ENCODE measurements at regions of chr13 and their contacts with region 1.

Region 1: GRCh38 chr13:99566125-99567083 is 65.1 kb downstream of the TM9SF2 start:
- DNase-seq: no peak
- ATAC-seq: peak; percentile 62
- H3K4me3 Mint-ChIP-seq: no peak overlapping the region
- H3K27ac Mint-ChIP-seq: peak overlapping the region; percentile 86
- H3K4me1 Mint-ChIP-seq: peaks cover 9% of the 10 kb centered on the region
- H3K27me3 Mint-ChIP-seq: peaks cover 2% of the 10 kb centered on the region; the same call in 1 of the 2 replicates
- CTCF ChIP-seq: no peak

Region 2: DNA sequence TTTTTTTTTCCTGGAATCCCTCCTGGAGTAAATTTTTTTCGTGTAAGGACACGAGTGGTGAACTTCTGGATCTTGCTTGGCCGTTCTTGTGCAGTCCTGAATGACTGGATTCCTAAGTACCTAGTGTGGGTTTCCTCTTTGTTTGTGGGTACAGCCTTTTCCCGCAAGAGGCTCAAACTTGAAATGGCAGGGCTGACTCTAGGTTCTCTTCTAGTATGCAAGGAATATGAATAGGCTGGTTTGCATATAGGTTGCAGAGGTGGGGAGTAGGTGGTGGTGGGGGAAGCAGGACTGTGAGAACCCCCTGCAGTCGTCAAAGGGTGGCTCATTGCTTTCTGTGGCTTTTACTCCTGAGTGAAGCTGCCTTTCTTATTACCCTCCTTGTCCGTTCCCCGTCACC is 352.2 kb before region 1 on chr13:
- CTCF ChIA-PET with region 1: no interaction called
- POLR2A ChIA-PET with region 1: no interaction called
- DNase-seq: no peak
- ATAC-seq: peak; percentile 60
- H3K4me3 Mint-ChIP-seq: no peak overlapping the region; the same call in 1 of the 2 replicates
- H3K27ac Mint-ChIP-seq: peak overlapping the region; percentile 71
- H3K4me1 Mint-ChIP-seq: peaks cover 45% of the 10 kb centered on the region
- H3K27me3 Mint-ChIP-seq: no peaks in the 10 kb centered on the region
- CTCF ChIP-seq: no peak

Region 3: DNA sequence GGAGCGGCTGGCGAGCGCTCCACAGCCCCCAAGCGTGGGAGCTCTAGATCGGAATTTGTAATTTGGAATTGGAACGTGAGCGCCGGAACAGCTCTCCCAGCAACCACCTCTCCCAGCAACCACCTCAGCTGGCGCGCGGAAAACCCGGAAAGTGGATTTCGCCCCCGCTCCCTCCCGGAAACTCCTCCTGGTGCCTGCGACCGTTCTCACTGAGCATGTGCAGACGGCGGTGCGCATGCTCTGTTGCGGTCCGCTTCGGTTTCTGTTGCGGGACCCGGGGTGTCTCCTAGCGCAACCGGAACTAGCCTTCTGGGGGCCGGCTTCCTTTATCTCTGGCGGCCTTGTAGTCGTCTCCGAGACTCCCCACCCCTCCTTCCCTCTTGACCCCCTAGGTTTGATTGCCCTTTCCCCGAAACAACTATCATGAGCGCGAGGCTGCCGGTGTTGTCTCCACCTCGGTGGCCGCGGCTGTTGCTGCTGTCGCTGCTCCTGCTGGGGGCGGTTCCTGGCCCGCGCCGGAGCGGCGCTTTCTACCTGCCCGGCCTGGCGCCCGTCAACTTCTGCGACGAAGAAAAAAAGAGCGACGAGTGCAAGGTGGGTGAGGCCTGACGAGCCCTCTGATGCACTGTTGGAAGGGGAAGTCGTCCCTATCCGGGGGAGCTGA is 65.1 kb before region 1 on chr13 and contains the start of gene TM9SF2:
- CTCF ChIA-PET with region 1: no interaction called
- POLR2A ChIA-PET with region 1: interaction called, 14 read pairs
- DNase-seq: peak; percentile 100
- ATAC-seq: peak; percentile 80
- H3K4me3 Mint-ChIP-seq: peak within 1 kb of the TSS; percentile 93
- H3K27ac Mint-ChIP-seq: peak within 1 kb of the TSS; percentile 95
- H3K4me1 Mint-ChIP-seq: peaks cover 34% of the 10 kb centered on the region
- H3K27me3 Mint-ChIP-seq: no peaks in the 10 kb centered on the region
- CTCF ChIP-seq: no peak
- total RNA-seq, gene TM9SF2: 81.9 to 84.0 TPM (median 81.9 TPM) in 3 replicates

Region 4: GRCh38 chr13:99689955-99690354 is 123.6 kb after region 1 on chr13:
- CTCF ChIA-PET with region 1: no interaction called
- POLR2A ChIA-PET with region 1: no interaction called
- DNase-seq: no peak
- ATAC-seq: no peak
- H3K4me3 Mint-ChIP-seq: peak overlapping the region; percentile 63
- H3K27ac Mint-ChIP-seq: peak overlapping the region; percentile 97
- H3K4me1 Mint-ChIP-seq: peaks cover 96% of the 10 kb centered on the region
- H3K27me3 Mint-ChIP-seq: peaks cover 6% of the 10 kb centered on the region
- CTCF ChIP-seq: no peak

Measured in WTC11 (cell line).